CD4-positive, alpha-beta memory T cell (primary cell): ENCODE measurements at regions of chr9 and their contacts with region 1.

Region 1: GRCh38 chr9:129884220-129885017 is 49.2 kb downstream of the USP20 start:
- DNase-seq: peak; percentile 93 to 97 (median 95)
- H3K4me3 ChIP-seq: peak overlapping the region; percentile 78 to 80
- H3K4me3 Mint-ChIP-seq: peak overlapping the region; percentile 90 to 98 (median 94)
- H3K27ac ChIP-seq: peak overlapping the region; percentile 98
- H3K27ac Mint-ChIP-seq: peak overlapping the region; percentile 99 to 100 (median 100)
- H3K4me1 ChIP-seq: peaks cover 62% of the 10 kb centered on the region
- H3K4me1 Mint-ChIP-seq: peaks cover 26 to 60% (median 40%) of the 10 kb centered on the region in 4 donors
- H3K27me3 ChIP-seq: no peaks in the 10 kb centered on the region
- H3K27me3 Mint-ChIP-seq: no peaks in the 10 kb centered on the region

Region 2: GRCh38 chr9:129823935-129824601 is 60.4 kb before region 1 on chr9 and contains the start of gene TOR1A:
- CTCF ChIA-PET with region 1: no interaction called
- POLR2A ChIA-PET with region 1: interaction called, 221 read pairs
- intact Hi-C with region 1: loop called (anchors 1 kb)
- DNase-seq: peak; percentile 89 to 95 (median 90)
- H3K4me3 ChIP-seq: peak within 1 kb of the TSS; percentile 24 to 73
- H3K4me3 Mint-ChIP-seq: peak within 1 kb of the TSS; percentile 84 to 91 (median 88)
- H3K27ac ChIP-seq: peak within 1 kb of the TSS; percentile 62
- H3K27ac Mint-ChIP-seq: peak within 1 kb of the TSS; percentile 73 to 95 (median 88)
- H3K4me1 ChIP-seq: peaks cover 8% of the 10 kb centered on the region
- H3K4me1 Mint-ChIP-seq: peaks cover 8 to 18% (median 13%) of the 10 kb centered on the region in 4 donors
- H3K27me3 ChIP-seq: no peaks in the 10 kb centered on the region
- H3K27me3 Mint-ChIP-seq: no peaks in the 10 kb centered on the region
- total RNA-seq, gene TOR1A: 39.8 to 41.9 TPM

Region 3: DNA sequence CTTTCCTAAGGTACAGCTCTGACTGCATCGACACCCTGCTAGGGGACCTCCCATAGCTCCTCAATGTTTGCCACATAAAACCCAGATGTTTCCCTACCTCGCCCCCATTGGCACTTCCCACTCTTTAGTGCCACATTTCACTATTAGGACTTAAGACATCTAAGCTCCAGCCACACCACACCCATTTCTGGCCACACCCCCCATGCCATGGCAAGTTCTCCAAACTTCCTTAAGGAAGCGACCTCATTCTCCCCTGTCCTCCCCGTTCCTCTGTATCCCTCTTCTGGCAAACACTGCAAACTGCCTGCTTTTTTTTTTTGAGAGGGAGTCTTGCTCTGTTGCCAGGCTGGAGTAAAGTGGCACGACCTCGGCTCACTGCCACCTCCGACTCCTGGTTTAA is 13.8 kb after region 1 on chr9:
- CTCF ChIA-PET with region 1: interaction called, 10 read pairs
- POLR2A ChIA-PET with region 1: interaction called, 59 read pairs
- intact Hi-C with region 1: loop called (anchors 1 kb)
- DNase-seq: peak in 1 of 5 donors; percentile 12
- H3K4me3 ChIP-seq: no peak overlapping the region
- H3K4me3 Mint-ChIP-seq: peak overlapping the region in 2 of 8 donors; percentile 25 to 32
- H3K27ac ChIP-seq: no peak overlapping the region
- H3K27ac Mint-ChIP-seq: peak overlapping the region; percentile 48 to 94 (median 89)
- H3K4me1 ChIP-seq: peaks cover 40% of the 10 kb centered on the region
- H3K4me1 Mint-ChIP-seq: peaks cover 29 to 62% (median 44%) of the 10 kb centered on the region in 4 donors
- H3K27me3 ChIP-seq: no peaks in the 10 kb centered on the region
- H3K27me3 Mint-ChIP-seq: no peaks in the 10 kb centered on the region

Region 4: DNA sequence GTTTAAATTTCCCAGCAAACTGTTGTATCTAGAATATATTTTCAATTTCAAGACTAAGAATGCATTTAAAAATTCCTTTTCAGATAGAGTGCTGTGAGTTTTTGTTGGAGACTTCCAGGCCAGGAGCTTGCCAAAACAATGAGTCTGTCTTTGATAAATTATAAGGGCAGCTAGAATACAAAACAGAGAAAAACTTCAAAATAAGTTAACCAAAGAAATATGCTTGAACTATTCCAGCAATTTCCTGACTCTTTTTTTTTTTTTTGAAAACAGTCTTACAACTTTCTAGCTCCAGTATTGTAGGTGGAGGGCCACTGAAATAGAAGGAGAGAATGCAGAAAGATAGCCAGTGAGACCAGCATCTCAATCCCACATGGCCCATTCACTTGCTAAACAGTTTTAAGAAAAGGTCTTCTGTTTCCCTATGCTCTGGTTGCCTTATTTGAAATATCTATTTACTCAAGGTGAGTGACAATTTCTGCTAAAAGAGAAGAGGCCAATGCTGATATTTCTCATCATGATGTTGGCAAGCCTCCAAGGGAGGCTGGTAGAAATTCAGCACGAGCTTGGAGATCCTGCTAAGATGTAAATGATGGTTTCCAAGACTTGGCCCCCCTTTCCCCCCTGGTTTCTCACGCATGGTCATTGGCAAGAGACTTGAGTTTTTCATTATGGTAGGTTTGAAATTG is 54.0 kb after region 1 on chr9:
- CTCF ChIA-PET with region 1: interaction called, 3 read pairs
- POLR2A ChIA-PET with region 1: interaction called, 83 read pairs
- intact Hi-C with region 1: loop called (anchors 5 kb)
- DNase-seq: peak in 1 of 5 donors; percentile 49
- H3K4me3 ChIP-seq: no peak overlapping the region
- H3K4me3 Mint-ChIP-seq: peak overlapping the region in 6 of 8 donors; percentile 15 to 76 (median 40)
- H3K27ac ChIP-seq: no peak overlapping the region
- H3K27ac Mint-ChIP-seq: peak overlapping the region; percentile 57 to 91 (median 89)
- H3K4me1 ChIP-seq: peaks cover 55% of the 10 kb centered on the region
- H3K4me1 Mint-ChIP-seq: peaks cover 34 to 76% (median 54%) of the 10 kb centered on the region in 4 donors
- H3K27me3 ChIP-seq: no peaks in the 10 kb centered on the region
- H3K27me3 Mint-ChIP-seq: no peaks in the 10 kb centered on the region

Region 5: GRCh38 chr9:129995409-129996160 is 111.2 kb after region 1 on chr9:
- CTCF ChIA-PET with region 1: interaction called, 13 read pairs
- POLR2A ChIA-PET with region 1: interaction called, 8 read pairs
- intact Hi-C with region 1: no loop called
- DNase-seq: peak in 2 of 5 donors; percentile 20 to 59
- H3K4me3 ChIP-seq: peak overlapping the region in 1 of 2 donors; percentile 15
- H3K4me3 Mint-ChIP-seq: peak overlapping the region; percentile 66 to 82 (median 76)
- H3K27ac ChIP-seq: peak overlapping the region; percentile 64
- H3K27ac Mint-ChIP-seq: peak overlapping the region; percentile 93 to 98 (median 96)
- H3K4me1 ChIP-seq: peaks cover 79% of the 10 kb centered on the region
- H3K4me1 Mint-ChIP-seq: peaks cover 55 to 87% (median 71%) of the 10 kb centered on the region in 4 donors
- H3K27me3 ChIP-seq: no peaks in the 10 kb centered on the region
- H3K27me3 Mint-ChIP-seq: no peaks in the 10 kb centered on the region

Region 6: DNA sequence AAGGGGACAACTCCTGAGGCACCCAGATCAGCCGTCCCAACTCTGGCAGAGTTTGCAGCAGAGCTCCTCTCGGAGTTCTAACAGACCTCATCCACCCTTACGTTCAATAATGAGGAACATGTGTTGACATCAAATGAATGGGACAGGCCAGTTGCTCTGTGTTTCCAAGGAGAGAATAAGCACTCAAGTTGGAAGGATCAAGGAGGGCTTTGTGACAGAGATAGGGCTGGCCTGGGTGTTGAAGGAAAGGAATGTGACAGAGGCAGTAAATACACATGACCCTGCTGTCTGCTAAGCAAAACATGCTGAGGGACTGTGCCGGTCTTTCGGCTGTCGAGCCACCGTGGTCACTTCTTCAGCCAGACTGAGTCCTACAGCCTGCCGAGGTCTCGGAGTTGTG is 217.5 kb after region 1 on chr9:
- CTCF ChIA-PET with region 1: interaction called, 23 read pairs
- POLR2A ChIA-PET with region 1: interaction called, 25 read pairs
- intact Hi-C with region 1: loop called (anchors 1 kb)
- DNase-seq: no peak
- H3K4me3 ChIP-seq: no peak overlapping the region
- H3K4me3 Mint-ChIP-seq: no peak overlapping the region
- H3K27ac ChIP-seq: no peak overlapping the region
- H3K27ac Mint-ChIP-seq: no peak overlapping the region
- H3K4me1 ChIP-seq: peaks cover 2% of the 10 kb centered on the region
- H3K4me1 Mint-ChIP-seq: peaks cover 4 to 12% (median 7%) of the 10 kb centered on the region in 4 donors
- H3K27me3 ChIP-seq: no peaks in the 10 kb centered on the region
- H3K27me3 Mint-ChIP-seq: no peaks in the 10 kb centered on the region

Region 7: DNA sequence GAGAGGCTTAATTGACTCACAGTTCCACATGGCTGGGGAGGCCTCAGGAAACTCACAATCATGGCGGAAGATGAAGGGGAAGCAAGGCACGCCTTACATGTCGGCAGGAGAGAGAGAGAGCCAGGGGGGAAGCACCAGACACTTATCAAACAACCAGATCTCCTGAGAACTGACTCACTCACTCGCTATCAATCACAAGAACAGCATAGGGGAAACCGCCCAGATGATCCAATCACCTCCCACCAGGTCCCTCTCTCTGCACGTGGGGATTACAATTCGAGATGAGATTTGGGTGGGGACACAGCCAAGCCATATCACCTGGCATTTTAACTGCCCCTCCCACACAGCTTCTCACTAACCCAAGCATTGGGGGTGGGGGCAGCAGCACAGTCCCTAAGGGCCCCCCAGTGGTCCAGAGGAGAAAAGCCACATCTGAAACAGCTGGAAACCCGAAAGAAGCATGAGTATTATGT is 484.2 kb after region 1 on chr9:
- CTCF ChIA-PET with region 1: no interaction called
- POLR2A ChIA-PET with region 1: no interaction called
- intact Hi-C with region 1: no loop called
- DNase-seq: no peak
- H3K4me3 ChIP-seq: no peak overlapping the region
- H3K4me3 Mint-ChIP-seq: peak overlapping the region in 1 of 8 donors; percentile 26
- H3K27ac ChIP-seq: no peak overlapping the region
- H3K27ac Mint-ChIP-seq: peak overlapping the region in 3 of 7 donors; percentile 8 to 72 (median 42)
- H3K4me1 ChIP-seq: peaks cover 4% of the 10 kb centered on the region
- H3K4me1 Mint-ChIP-seq: peaks cover 3 to 8% (median 5%) of the 10 kb centered on the region in 4 donors
- H3K27me3 ChIP-seq: no peaks in the 10 kb centered on the region
- H3K27me3 Mint-ChIP-seq: peaks cover 2 to 6% of the 10 kb centered on the region in 2 donors